ENCODE measurements at regions of chr16 and their contacts with region 1.

Region 1: DNA sequence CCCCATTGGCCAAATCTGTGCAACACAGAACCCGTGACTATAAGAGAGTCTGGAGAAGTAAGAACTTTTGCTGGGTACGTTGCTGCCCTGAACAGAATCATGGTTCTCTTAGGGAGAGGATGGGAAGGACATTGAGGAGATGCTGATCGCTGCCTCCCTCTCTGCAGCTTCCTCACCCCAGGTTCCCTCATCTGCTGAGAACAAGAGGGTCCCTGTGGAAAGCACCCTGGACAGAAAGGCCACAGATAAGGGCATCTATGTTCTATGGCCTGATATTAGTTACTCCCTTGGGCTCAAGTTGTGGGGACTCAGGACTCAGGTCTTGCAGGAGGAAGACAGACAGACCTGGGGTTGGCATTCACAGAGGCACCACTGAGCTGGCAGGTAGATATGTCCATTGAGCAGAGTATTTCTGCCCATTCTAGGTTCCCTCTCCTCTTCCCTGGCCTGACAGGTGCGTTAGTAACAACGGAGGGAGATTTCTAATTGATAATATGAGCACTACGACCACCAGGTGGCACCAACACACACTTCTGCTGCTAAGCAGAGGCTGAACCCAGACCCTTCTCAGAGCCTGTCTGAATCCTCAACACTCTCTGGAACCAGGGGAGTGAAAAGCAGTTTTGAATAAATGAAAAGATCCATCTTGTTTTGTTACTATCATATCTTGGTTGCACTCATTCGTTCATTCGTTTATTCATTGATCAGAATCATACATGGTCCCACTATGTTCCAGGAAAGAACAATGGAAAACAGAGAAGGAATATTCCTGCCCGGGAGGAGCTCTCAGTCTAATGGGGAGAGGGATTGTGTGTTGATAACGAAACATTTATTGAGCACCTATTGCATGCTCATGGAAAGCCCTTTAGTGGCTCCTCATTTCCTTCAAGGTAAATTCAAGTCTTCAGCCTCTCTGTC is 56.4 kb downstream of the SLC6A2 start:
- DNase-seq: peak; percentile 53
- CTCF ChIP-seq: peak; percentile 71

Region 2: DNA sequence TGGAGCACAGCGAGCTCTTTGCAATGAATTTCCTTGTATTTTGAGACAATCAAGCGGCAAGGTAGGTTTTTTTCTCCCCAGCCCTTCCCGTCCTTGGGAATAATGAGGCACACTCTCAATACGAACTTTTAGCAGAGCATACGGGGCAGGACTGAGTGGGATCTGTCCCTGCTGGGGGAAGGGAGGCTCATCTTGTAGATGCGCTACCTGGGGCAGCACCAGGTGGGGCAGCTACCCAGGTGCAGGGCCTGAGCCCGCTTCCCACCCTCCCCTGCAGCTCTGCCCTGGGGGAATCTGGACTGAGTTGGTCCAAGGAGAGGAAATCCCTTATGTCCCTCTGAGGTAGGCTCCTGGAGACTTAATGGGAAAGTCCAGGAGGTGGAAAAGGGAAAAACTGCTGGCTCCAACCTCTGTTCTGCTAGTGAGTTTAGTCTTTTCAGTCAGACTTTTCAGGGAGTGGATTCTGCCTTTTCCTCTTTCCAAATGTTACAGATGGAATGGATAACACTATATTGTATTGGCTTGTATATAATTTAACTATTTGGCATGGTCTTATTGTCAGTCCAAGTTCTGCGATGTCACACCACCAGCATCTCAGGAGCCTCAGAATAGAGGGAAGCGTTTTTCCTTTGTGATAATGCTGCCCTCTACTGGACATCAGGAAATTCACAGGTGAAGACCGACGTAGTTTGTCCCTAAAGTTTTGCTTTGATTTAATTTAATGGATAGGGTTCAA is 130.3 kb after region 1 on chr16:
- in situ Hi-C with region 1: loop called (anchors 5 kb)
- DNase-seq: peak; percentile 65
- CTCF ChIP-seq: peak; percentile 67

Region 3: DNA sequence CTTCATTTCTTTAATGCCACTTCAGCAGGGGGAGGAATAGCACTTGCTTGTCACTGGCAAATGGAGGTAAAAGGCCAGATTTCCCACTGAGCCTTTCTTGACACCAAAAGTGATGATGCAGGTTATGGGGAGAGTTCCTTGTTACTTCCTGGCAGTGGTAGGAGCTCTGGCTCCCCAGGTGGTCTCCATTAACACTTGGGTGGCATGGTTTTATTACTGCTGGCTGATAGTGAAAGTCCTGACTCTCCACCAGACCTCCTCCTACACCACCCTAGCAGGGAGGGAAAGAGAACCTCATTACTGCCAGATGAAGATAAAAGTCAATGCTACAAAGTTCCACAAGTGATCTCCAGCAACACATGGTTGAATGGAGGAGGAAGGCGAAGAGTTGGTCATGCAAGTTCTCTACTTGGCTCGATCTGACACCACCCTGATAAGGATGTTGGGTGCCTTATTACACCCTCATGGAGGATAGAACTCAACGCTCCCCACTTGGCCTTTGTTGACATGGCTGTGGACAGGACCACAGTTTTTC is 326.4 kb after region 1 on chr16:
- in situ Hi-C with region 1: no loop called
- DNase-seq: no peak
- CTCF ChIP-seq: no peak

Region 4: DNA sequence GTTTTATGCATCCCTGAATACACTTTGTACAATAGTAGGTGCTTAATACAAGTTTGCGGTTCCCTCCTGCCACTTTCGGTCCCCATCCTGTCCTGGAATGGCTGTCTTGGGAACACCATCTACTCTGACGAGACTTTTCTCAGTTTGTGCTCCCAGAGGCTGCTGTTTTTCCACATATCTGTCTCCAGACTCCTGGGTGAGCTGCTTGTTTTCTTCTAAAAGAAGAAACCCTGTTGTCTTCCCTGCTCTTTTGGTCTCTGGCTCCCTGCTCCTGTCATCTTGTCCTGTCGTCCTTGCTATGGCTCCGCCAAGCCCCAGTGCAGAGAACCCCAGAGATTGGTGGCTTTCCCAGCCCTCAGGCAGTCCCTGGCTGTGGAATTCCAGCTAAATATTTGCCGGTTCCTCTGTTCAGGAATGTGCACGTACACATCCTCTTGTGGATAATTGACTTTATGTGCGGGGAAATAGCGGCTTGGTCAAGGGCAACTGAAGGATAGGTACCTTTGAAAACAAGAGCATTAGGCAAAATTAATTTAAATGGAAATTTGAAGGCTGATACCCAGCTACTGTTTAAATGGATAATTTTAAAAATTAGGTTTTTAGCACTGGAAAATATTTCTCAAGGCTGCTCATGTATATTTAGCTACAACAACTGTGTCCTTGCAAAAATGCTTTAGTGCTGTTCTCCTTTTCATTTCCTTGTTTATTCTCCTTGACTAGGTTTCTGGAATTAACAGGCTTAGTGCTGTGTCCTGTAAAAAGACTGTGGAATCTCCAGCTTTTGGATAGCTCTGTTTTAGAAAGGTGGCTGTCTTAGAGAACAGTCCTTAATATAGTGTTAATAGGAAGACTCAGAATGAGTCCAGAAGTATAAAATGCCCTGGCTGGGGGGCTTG is 1102.6 kb after region 1 on chr16:
- in situ Hi-C with region 1: no loop called
- DNase-seq: no peak
- CTCF ChIP-seq: no peak